ENCODE measurements at regions of chr9 and their contacts with region 1.

Region 1: GRCh38 chr9:92325269-92325990 is at the starts of genes CENPP and NOL8:
- DNase-seq: peak; percentile 92
- H3K4me3 Mint-ChIP-seq: peak within 1 kb of the TSS; percentile 97
- H3K27ac Mint-ChIP-seq: peak within 1 kb of the TSS; percentile 98
- H3K4me1 Mint-ChIP-seq: peaks cover 26% of the 10 kb centered on the region
- H3K27me3 Mint-ChIP-seq: no peaks in the 10 kb centered on the region
- CTCF ChIP-seq: no peak
- total RNA-seq, gene CENPP: 1.5 and 4.2 TPM in 2 replicates
- total RNA-seq, gene NOL8: 38.7 and 41.8 TPM in 2 replicates

Region 2: GRCh38 chr9:92293452-92294296 is 31.8 kb before region 1 on chr9 and contains the start of gene IARS1:
- CTCF ChIA-PET with region 1: interaction called, 5 read pairs
- POLR2A ChIA-PET with region 1: interaction called, 8 read pairs
- intact Hi-C with region 1: loop called (anchors 1 kb)
- DNase-seq: peak; percentile 98
- H3K4me3 Mint-ChIP-seq: peak within 1 kb of the TSS; percentile 80
- H3K27ac Mint-ChIP-seq: peak within 1 kb of the TSS; percentile 96
- H3K4me1 Mint-ChIP-seq: peaks cover 27% of the 10 kb centered on the region
- H3K27me3 Mint-ChIP-seq: no peaks in the 10 kb centered on the region
- CTCF ChIP-seq: no peak
- total RNA-seq, gene IARS1: 390 and 403 TPM in 2 replicates

Region 3: GRCh38 chr9:92308893-92309292 is 16.5 kb before region 1 on chr9:
- CTCF ChIA-PET with region 1: interaction called, 6 read pairs
- POLR2A ChIA-PET with region 1: interaction called, 40 read pairs
- intact Hi-C with region 1: no loop called
- DNase-seq: no peak
- H3K4me3 Mint-ChIP-seq: no peak overlapping the region
- H3K27ac Mint-ChIP-seq: no peak overlapping the region
- H3K4me1 Mint-ChIP-seq: peaks cover 13% of the 10 kb centered on the region
- H3K27me3 Mint-ChIP-seq: no peaks in the 10 kb centered on the region
- CTCF ChIP-seq: no peak

Region 4: DNA sequence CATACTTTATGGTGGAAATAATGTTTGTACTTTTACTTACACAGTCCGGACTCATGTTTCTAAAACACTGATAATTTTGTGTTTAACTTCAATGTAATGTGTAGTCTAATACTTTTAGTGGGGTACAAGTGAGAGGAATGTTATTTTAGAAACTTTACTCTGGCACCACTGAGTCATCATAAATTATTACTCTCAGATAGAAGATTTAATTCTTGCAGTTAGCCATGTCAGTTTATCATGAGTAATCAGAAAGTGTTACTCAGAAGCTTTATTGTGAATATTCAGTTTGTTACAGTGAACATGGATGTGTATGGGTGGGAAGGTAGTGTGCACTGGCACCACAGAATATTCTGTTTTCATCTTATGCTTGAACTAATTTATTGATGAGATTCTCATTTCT is 58.9 kb after region 1 on chr9:
- CTCF ChIA-PET with region 1: no interaction called
- POLR2A ChIA-PET with region 1: interaction called, 16 read pairs
- intact Hi-C with region 1: no loop called
- DNase-seq: peak; percentile 34
- H3K4me3 Mint-ChIP-seq: peak overlapping the region; percentile 6
- H3K27ac Mint-ChIP-seq: peak overlapping the region; percentile 79
- H3K4me1 Mint-ChIP-seq: peaks cover 20% of the 10 kb centered on the region
- H3K27me3 Mint-ChIP-seq: no peaks in the 10 kb centered on the region
- CTCF ChIP-seq: no peak

Region 5: GRCh38 chr9:92501671-92502393 is 176.4 kb after region 1 on chr9:
- CTCF ChIA-PET with region 1: no interaction called
- POLR2A ChIA-PET with region 1: interaction called, 64 read pairs
- intact Hi-C with region 1: loop called (anchors 5 kb)
- DNase-seq: peak; percentile 68
- H3K4me3 Mint-ChIP-seq: peak overlapping the region; percentile 8
- H3K27ac Mint-ChIP-seq: peak overlapping the region; percentile 57
- H3K4me1 Mint-ChIP-seq: peaks cover 28% of the 10 kb centered on the region
- H3K27me3 Mint-ChIP-seq: no peaks in the 10 kb centered on the region
- CTCF ChIP-seq: peak; percentile 47

Region 6: GRCh38 chr9:92650839-92651621 is 325.6 kb after region 1 on chr9:
- CTCF ChIA-PET with region 1: no interaction called
- POLR2A ChIA-PET with region 1: interaction called, 11 read pairs
- intact Hi-C with region 1: no loop called
- DNase-seq: no peak
- H3K4me3 Mint-ChIP-seq: no peak overlapping the region
- H3K27ac Mint-ChIP-seq: peak overlapping the region; percentile 78
- H3K4me1 Mint-ChIP-seq: peaks cover 28% of the 10 kb centered on the region
- H3K27me3 Mint-ChIP-seq: no peaks in the 10 kb centered on the region
- CTCF ChIP-seq: no peak